Left cardiac atrium (tissue), 4 donors: ENCODE measurements at regions of chr13 and their contacts with region 1.

Region 1: DNA sequence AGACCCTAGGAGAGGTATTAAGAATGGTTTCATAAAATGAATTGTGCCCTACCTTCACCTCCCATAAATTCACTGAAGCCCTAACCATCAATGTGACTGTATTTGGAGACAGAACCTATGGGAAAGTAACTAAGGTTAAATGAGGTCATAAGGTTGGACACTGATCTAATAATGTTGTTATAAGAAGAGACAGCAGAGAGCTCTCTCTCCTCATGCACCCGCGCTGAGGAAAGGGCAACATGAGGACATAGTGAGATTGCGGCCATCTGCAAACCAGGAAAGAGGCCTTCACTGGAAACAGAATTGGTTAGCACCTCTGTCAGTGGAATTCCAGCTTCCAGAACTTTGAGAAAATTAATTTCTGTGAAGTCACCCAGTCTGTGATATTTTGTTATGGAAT is 1396.1 kb upstream of the MIR17HG start:
- DNase-seq: no peak
- ATAC-seq: peak in 1 of 2 donors; percentile 41

Region 2: DNA sequence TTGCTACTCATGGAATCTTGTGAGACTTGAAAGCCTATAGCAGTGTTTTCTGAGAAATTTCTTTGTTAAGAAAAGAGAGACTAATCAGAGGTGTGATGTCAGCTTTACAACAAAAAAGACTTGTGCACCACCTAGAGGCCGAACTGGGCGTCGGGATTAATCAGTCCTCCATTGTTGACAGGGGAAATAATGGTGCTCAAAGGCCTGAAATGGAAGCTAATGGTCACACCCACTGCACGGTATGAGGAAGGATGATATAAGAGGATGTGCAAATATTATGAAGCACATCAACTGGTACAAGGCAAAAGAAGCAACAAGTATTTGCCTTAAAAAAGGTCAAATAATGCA is 916.0 kb after region 1 on chr13:
- intact Hi-C with region 1: loop called in 1 of 2 experiments (anchors 10 kb)
- DNase-seq: peak; percentile 62
- ATAC-seq: peak; percentile 91 to 94